ENCODE measurements at regions of chr11 and their contacts with region 1.

Region 1: GRCh38 chr11:131481303-131481702 is 110.9 kb downstream of the NTM start:
- DNase-seq: no peak
- H3K4me3 ChIP-seq: no peak overlapping the region
- CTCF ChIP-seq: no peak

Region 2: GRCh38 chr11:131302831-131303230 is 178.5 kb before region 1 on chr11:
- in situ Hi-C with region 1: no loop called
- DNase-seq: peak; percentile 50
- H3K4me3 ChIP-seq: no peak overlapping the region
- CTCF ChIP-seq: no peak

Region 3: GRCh38 chr11:131354251-131354701 is 127.0 kb before region 1 on chr11:
- in situ Hi-C with region 1: no loop called
- DNase-seq: no peak
- H3K4me3 ChIP-seq: no peak overlapping the region
- CTCF ChIP-seq: no peak

Region 4: GRCh38 chr11:131389582-131389981 is 91.7 kb before region 1 on chr11:
- in situ Hi-C with region 1: no loop called
- DNase-seq: no peak
- H3K4me3 ChIP-seq: no peak overlapping the region
- CTCF ChIP-seq: no peak

Region 5: GRCh38 chr11:131584785-131585592 is 103.7 kb after region 1 on chr11:
- in situ Hi-C with region 1: loop called (anchors 5 kb)
- DNase-seq: no peak
- H3K4me3 ChIP-seq: no peak overlapping the region
- CTCF ChIP-seq: peak; percentile 47

Region 6: DNA sequence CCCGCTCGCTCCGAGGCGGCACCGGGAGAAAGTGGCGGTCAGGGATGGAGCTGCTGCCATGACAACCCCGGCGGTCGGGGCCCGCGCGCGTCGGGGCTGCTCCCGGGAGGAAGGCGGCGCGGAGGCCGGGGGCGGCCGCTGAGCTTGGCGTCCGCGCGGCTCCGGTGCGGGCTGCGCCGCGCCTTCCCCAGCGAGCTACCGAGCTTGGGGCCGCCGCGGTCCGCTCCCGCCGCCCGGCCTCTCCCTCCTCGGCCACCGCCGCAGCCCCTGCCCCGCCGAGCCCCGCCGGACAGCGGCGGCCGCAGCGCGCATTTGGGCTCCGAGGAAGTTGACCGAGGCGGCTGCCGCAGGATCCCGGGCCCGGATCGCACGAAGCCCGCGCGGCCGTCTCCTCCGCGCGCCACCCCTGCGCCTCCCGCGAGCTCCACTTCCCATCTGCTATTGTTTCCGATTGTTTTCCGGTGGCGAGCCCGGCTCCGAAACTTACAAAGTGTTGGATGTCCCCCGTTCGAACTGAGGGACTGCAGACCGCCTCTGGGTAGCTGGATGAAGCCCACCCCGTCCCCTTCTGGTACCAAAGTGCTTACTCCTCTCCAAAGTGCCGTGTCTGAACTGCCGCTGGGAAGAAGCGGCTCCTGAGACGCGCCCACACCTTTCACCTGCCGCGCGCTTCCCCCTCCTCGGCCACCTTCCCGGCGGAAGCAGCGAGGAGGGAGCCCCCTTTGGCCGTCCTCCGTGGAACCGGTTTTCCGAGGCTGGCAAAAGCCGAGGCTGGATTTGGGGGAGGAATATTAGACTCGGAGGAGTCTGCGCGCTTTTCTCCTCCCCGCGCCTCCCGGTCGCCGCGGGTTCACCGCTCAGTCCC is 429.5 kb after region 1 on chr11:
- in situ Hi-C with region 1: no loop called
- DNase-seq: no peak
- H3K4me3 ChIP-seq: peak overlapping the region; percentile 90
- CTCF ChIP-seq: no peak